ENCODE measurements at regions of chr14 and their contacts with region 1.

Region 1: DNA sequence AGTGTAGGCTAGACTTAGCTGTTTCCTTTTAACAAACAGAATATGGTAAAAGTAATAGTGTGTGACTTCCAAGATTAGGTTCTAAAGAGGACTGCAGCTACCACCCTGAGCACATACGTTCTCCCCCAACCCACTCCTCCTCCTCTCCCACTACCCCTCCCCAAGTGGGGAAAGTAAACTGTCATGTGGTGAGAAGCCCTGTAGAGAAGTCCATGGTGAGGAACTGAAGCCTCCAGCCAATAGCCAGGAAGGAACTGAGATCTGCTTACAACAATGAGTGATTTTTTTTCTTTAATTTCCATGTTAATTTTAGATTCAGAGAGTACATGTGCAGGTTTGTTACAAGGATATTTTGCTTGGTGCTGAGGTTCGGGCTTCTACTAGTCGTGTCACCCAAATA is 57.0 kb upstream of the EGLN3 start:
- DNase-seq: no peak
- H3K4me3 ChIP-seq: no peak overlapping the region
- H3K27ac ChIP-seq: no peak overlapping the region
- H3K4me1 ChIP-seq: no peaks in the 10 kb centered on the region
- H3K27me3 ChIP-seq: no peaks in the 10 kb centered on the region
- CTCF ChIP-seq: no peak

Region 2: GRCh38 chr14:33959692-33960151 is 48.2 kb before region 1 on chr14:
- CTCF ChIA-PET with region 1: no interaction called
- dilution Hi-C with region 1: loop called (anchors 5 kb)
- in situ Hi-C with region 1: no loop called
- intact Hi-C with region 1: no loop called
- DNase-seq: no peak
- H3K4me3 ChIP-seq: no peak overlapping the region
- H3K27ac ChIP-seq: no peak overlapping the region
- H3K4me1 ChIP-seq: no peaks in the 10 kb centered on the region
- H3K27me3 ChIP-seq: no peaks in the 10 kb centered on the region
- CTCF ChIP-seq: no peak